Activated B cell treated with CpG ODN at 0.5 μM for 24 hours (primary cell): ENCODE measurements at regions of chr1 and their contacts with region 1.

Region 1: DNA sequence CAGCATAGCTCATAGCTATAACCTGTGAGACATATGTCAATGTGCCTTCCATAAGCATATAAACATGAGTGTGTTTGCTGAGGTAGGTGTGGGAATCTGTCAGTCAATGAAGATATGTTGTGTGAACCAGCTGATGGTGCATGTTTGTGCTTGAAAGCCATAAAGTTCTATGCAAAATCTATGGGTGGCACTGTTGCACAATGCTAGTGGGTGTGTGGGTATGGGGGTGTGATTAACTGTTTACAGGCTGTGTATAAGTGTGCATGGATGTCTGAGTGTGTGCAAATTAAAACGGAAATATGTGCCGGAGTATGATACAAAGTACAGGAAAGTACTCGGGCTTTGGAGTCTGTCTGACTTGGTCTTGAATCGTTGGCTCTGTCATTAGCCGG is 1.0 kb upstream of the ATP2B4 start:
- DNase-seq: no peak
- ATAC-seq: peak; percentile 48
- H3K4me3 Mint-ChIP-seq: peak overlapping the region; percentile 85
- H3K27ac Mint-ChIP-seq: peak overlapping the region; percentile 88
- H3K4me1 Mint-ChIP-seq: peaks cover 47% of the 10 kb centered on the region
- H3K27me3 Mint-ChIP-seq: no peaks in the 10 kb centered on the region
- CTCF ChIP-seq: no peak

Region 2: DNA sequence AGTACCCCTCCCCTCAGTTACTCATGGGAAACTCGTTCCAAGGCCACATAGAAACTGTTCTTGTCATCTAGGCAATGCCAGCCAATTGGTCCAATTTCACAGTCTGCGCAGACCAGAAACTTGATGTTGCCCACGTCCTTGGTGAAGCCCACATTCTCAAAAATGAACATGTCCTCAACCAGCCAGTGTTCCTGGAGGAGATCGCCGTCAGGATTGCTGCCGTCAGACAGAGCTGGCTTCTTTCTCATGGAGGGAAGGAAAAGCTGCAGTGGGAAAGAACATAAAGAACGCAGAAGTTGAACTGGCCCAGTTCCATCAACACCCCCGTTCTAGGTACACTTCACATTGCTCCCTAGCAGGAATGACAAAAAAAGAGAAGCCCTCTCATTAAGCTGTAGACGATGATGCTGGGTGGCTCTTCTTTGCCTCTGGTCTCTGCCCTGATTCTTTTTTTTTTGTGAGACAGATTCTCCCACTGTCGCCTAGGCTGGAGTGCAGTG is 744.6 kb before region 1 on chr1:
- CTCF ChIA-PET with region 1: no interaction called
- POLR2A ChIA-PET with region 1: no interaction called
- intact Hi-C with region 1: no loop called
- DNase-seq: no peak
- ATAC-seq: no peak
- H3K4me3 Mint-ChIP-seq: no peak overlapping the region
- H3K27ac Mint-ChIP-seq: no peak overlapping the region
- H3K4me1 Mint-ChIP-seq: no peaks in the 10 kb centered on the region
- H3K27me3 Mint-ChIP-seq: no peaks in the 10 kb centered on the region
- CTCF ChIP-seq: no peak

Region 3: DNA sequence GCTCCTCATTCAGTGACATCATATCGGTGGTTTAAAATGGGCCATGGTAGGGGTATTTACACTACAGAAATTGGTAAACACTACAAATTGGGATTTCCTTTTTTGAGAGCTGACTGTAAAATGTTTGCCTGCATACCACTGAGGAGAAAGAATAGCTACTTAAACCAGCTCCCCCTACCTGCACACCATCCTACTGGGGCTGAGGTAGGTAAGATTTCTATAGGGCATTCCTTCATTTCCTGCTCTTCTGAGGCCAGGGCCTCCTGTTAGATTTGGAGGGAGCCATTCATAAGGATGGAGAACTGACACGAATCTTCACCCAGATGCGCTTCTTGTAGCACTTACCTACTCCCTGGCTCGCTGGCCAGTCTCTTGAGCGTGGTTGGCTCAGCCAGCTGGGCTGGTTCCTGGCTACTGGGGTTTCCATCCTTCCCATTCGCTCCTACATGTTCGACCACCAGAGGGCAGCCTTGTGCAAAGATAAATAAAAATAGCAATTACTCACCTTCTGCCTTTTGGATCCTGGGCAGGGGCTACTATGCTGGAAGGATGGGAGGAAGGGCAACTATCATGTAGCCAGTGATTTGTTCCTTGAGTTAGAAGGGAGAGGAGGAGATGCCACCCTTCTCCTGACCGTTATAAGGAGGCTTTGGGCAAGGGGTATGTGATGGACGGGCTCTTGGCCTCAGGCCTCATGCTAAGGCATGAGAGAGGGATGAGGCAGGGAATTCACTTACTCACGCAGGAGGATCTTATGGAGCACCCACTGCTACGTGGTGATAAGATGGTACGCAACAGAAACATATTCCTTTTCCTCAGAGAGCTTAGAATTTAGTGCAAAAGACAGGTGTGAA is 121.0 kb before region 1 on chr1:
- CTCF ChIA-PET with region 1: interaction called, 13 read pairs
- POLR2A ChIA-PET with region 1: no interaction called
- intact Hi-C with region 1: loop called (anchors 1 kb)
- DNase-seq: peak; percentile 45
- ATAC-seq: peak; percentile 57
- H3K4me3 Mint-ChIP-seq: no peak overlapping the region
- H3K27ac Mint-ChIP-seq: peak overlapping the region; percentile 10
- H3K4me1 Mint-ChIP-seq: peaks cover 2% of the 10 kb centered on the region
- H3K27me3 Mint-ChIP-seq: peaks cover 12% of the 10 kb centered on the region
- CTCF ChIP-seq: peak; percentile 83

Region 4: DNA sequence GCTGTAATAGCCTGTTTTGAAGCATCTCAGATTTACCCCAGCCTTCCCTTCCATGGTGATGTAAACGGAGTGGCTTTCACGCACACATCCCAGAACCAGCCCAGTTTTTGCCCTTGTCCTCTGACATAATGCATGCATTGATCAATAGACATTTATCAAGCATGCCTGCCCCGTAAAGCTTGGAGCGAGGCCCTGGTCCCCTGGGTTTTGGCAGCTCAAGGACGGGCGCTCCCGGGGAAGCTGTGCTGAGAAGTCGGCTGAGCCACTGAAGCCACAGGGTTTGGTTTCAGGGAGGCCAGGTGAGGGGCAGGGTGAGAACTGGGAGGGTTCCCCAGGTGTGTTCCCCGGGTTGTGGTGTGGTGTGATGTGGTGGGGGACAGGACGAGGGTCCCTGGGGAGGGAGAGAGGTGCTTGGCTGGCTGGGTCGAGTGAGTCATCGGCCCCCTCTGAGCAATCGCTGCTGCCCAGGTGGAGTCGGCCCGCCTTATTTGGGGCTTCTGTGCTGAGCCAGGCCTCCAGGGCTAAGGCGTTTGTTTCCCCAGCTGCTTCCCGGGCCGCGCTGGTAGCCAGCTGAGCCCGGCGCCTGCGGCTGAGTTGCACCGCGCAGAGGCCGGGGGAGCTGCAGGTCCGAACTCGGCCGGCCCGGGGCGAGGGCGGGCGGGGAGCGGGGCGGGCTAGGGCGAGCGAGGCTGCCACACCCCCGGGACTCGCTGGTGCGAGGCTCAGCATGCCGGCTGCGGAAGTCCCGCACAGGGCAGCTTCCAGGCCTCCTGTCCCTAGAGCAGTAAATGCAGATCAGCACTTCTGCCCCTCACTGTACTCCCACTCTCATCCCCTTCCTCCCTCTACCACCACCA is 24.6 kb after region 1 on chr1:
- CTCF ChIA-PET with region 1: interaction called, 6 read pairs
- POLR2A ChIA-PET with region 1: interaction called, 15 read pairs
- intact Hi-C with region 1: loop called (anchors 1 kb)
- DNase-seq: peak; percentile 66
- ATAC-seq: peak; percentile 81
- H3K4me3 Mint-ChIP-seq: peak overlapping the region; percentile 81
- H3K27ac Mint-ChIP-seq: peak overlapping the region; percentile 84
- H3K4me1 Mint-ChIP-seq: peaks cover 42% of the 10 kb centered on the region
- H3K27me3 Mint-ChIP-seq: no peaks in the 10 kb centered on the region
- CTCF ChIP-seq: no peak

Region 5: DNA sequence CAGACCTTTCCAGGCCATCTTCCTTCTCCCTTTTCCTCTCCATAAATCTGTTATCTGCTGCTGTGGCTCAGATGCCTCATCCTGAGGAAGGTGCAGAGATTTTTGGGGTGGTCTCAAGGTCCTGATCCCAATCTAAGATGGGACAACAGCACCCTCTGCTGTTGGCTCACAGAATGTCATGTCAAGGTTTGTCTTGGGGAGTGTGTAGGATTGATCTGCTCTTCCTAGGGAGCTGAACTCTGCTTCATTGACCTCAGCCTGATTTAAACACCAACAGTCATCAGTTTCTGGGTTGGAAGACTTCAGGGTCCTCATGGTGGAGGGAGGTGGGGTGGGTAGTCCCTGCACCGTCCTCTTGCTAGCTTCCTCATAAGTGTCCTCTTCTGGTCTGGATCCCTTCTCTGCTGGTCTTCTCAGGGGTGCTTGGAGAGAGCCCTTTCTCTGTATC is 76.5 kb after region 1 on chr1:
- CTCF ChIA-PET with region 1: interaction called, 81 read pairs
- POLR2A ChIA-PET with region 1: interaction called, 4 read pairs
- intact Hi-C with region 1: loop called (anchors 1 kb)
- DNase-seq: peak; percentile 48
- ATAC-seq: peak; percentile 54
- H3K4me3 Mint-ChIP-seq: no peak overlapping the region
- H3K27ac Mint-ChIP-seq: no peak overlapping the region
- H3K4me1 Mint-ChIP-seq: peaks cover 5% of the 10 kb centered on the region
- H3K27me3 Mint-ChIP-seq: no peaks in the 10 kb centered on the region
- CTCF ChIP-seq: peak; percentile 83

Region 6: GRCh38 chr1:204128964-204129896 is 503.6 kb after region 1 on chr1:
- CTCF ChIA-PET with region 1: no interaction called
- POLR2A ChIA-PET with region 1: no interaction called
- intact Hi-C with region 1: loop called (anchors 2 kb)
- DNase-seq: peak; percentile 41
- ATAC-seq: peak; percentile 89
- H3K4me3 Mint-ChIP-seq: no peak overlapping the region
- H3K27ac Mint-ChIP-seq: no peak overlapping the region
- H3K4me1 Mint-ChIP-seq: peaks cover 8% of the 10 kb centered on the region
- H3K27me3 Mint-ChIP-seq: peaks cover 7% of the 10 kb centered on the region
- CTCF ChIP-seq: no peak